Activated CD4-positive, alpha-beta T cell treated with anti-CD3 and anti-CD28 coated beads, Interleukin-2, amount 10 ng/mL, durations not matched to agents 24 days and 14 days (primary cell): ENCODE measurements at regions of chr5 and their contacts with region 1.

Region 1: DNA sequence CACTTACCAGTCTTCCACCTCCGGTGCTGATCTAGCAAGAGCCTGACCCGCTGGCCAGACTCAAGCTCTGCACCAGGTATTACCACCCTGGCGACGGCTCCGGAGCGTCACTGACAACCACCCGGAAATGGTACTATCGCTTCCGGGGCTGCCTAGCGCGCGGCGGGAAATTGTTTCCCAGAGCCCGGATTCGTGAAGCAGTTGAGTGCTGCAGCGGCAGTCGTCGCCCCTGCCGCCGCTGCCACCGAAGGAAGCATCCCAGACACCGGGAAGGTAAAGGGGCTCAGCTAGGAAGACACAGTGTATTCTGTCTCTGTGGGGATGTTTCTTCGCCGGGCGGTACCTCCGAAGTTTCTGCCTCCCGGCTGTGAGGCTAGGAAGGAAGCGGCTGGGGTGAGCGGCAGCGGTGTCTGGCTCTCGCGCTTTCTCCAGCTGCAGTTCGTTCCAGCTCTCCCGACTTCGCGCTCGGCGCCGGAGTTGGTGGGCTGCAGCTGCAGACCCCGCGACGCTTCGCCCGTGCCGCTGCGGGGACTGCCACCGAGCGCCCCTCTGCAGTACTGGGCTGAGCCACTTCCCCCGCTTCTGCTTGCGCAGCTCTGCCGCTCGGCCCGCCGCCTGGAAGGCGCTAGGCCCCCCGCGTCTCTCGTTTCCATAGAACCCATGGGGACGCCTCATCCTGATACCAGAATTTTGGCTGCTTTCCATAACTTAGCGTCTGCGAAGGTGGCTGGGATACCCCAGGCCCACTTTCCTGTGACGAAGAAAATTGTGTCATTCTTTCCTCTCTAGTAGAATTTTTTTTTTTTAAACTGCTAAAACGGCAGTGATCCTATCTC is at the starts of genes KIAA0825 and SLF1:
- DNase-seq: peak; percentile 96
- H3K4me3 Mint-ChIP-seq: peak within 1 kb of the TSS; percentile 95
- H3K27ac Mint-ChIP-seq: peak within 1 kb of the TSS; percentile 91
- H3K4me1 Mint-ChIP-seq: peaks cover 32% of the 10 kb centered on the region
- H3K27me3 Mint-ChIP-seq: no peaks in the 10 kb centered on the region
- total RNA-seq, gene KIAA0825: 0.28 and 0.54 TPM in 2 replicates
- total RNA-seq, gene SLF1: 11.5 and 13.7 TPM in 2 replicates

Region 2: GRCh38 chr5:94524841-94525697 is 93.6 kb before region 1 on chr5:
- intact Hi-C with region 1: loop called (anchors 5 kb)
- DNase-seq: peak; percentile 78
- H3K4me3 Mint-ChIP-seq: no peak overlapping the region
- H3K27ac Mint-ChIP-seq: no peak overlapping the region
- H3K4me1 Mint-ChIP-seq: no peaks in the 10 kb centered on the region
- H3K27me3 Mint-ChIP-seq: no peaks in the 10 kb centered on the region

Region 3: DNA sequence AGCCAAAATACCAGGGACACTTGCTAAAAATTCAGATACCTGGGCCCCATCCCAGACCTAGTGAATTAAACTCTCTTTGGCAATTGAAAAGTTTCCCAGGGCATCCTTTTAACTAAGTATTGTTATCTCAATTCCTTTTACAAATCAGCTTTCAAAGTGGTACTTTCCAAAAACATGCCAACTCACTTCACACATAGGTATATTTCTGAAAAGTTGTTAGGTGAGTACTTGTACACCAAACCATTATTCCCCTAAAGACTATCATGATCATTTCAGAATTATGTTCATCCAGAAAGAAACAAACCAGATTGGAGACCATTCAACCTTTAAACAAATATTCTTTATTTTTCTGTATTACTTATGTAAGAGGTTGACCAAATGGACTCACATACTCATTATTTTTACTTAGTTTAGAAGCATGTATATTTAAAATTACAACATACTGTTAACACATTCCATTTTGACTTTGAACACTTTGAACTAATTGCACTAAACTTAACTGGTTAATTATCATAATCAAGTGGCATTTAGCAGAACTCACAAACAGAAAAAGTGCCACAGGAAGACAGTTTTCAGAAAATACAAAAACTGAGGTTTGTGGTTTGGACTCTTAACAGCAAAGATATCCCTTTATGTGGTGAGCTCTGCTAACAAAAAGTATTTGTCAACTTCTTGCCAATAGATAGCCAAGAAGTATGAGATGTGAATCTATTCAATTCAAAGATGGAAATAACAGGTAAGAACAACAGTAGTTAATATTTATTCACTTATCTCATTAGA is 41.1 kb before region 1 on chr5:
- intact Hi-C with region 1: loop called (anchors 2 kb)
- DNase-seq: peak; percentile 75
- H3K4me3 Mint-ChIP-seq: peak overlapping the region; percentile 36
- H3K27ac Mint-ChIP-seq: peak overlapping the region; percentile 20
- H3K4me1 Mint-ChIP-seq: peaks cover 42% of the 10 kb centered on the region
- H3K27me3 Mint-ChIP-seq: no peaks in the 10 kb centered on the region

Region 4: GRCh38 chr5:94632024-94632423 is 13.3 kb after region 1 on chr5:
- intact Hi-C with region 1: loop called (anchors 2 kb)
- DNase-seq: no peak
- H3K4me3 Mint-ChIP-seq: no peak overlapping the region
- H3K27ac Mint-ChIP-seq: no peak overlapping the region
- H3K4me1 Mint-ChIP-seq: peaks cover 10% of the 10 kb centered on the region
- H3K27me3 Mint-ChIP-seq: no peaks in the 10 kb centered on the region

Region 5: DNA sequence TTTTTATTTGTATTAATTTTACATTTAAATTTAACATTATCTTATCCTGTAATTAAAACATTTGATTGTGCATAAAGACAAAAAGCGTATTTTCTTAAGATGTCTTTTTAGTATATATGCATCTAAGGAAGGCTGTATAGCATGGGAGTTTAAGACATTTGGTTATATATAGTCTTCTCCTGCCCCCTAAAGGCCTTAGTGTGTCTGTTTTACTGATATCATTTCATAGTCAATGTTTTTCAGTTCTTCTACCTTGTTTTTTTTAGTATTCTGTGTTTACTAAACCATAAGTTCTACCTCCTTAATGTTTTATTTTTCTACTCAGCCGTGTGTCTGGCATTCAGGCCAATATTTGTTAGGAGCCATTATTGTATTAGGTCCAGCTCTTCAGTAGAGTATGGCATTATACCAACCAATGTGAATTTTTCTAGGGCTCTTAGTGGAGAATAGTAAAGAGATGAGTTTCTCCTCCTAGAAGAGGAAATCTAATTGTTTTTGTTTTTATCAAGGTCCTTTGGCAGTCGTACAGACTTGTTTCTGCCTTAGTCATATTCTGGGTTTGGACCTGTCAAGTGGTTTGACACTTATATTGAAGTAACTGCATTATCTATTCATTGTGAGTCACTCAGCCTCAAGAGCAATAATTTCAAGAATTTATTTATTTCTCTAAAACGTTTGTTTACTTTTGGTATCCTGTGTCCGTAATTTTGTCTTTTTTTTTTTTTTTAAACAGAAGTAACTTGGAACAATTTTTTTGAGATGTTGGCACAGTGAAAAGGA is 74.5 kb after region 1 on chr5:
- intact Hi-C with region 1: loop called (anchors 5 kb)
- DNase-seq: no peak
- H3K4me3 Mint-ChIP-seq: no peak overlapping the region
- H3K27ac Mint-ChIP-seq: no peak overlapping the region
- H3K4me1 Mint-ChIP-seq: peaks cover 4% of the 10 kb centered on the region
- H3K27me3 Mint-ChIP-seq: no peaks in the 10 kb centered on the region